Heart right ventricle (tissue), 16 donors: ENCODE measurements at regions of chr12 and their contacts with region 1.

Region 1: DNA sequence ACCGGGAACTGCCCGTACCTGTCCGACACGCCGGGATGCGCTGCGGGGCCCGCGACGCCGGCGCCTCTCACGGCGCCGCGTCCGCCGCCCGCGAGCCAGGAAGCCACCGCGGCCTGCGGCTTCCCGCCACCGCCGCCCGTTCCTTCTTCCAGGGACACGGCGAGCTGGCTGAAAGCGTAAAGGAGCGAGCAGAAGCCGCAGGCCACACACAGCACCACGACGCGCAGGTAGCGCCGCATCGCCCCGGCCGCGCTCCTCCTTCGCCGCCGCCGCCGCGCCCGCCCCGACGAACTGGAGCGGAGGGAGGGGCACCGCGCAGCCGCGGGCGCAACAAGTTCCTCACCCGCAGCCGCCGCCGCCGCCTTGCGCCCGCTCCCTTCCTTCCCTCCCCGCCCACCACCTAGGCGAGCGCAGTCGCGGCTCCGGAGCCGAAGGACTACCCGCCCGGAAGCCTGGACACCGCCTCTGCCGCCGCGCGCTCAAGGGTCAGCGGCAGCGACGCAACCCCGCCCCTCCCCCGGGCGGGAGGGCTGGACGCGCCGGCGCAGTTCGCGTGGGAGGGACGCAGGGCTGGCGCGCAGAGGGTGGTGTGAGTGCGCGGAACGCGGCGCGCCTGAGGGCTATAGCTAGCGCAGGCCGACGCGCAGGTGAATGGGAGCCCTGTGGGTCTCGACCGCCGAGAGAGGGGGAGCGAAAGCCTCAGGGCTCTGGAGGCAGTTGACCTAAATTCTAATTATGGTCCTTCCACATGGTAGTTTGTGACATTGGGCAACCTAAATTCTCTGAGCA is at the start of gene GXYLT1:
- DNase-seq: peak; percentile 93 to 95
- ATAC-seq: peak; percentile 98 to 100 (median 99)
- H3K4me3 ChIP-seq: peak within 1 kb of the TSS; percentile 49 to 87 (median 76)
- H3K27ac ChIP-seq: peak within 1 kb of the TSS; percentile 55 to 91 (median 88)
- H3K4me1 ChIP-seq: peaks cover 0 to 40% (median 29%) of the 10 kb centered on the region in 9 donors
- H3K27me3 ChIP-seq: no peaks in the 10 kb centered on the region
- CTCF ChIP-seq: peak in 2 of 9 donors; percentile 13 to 17
- total RNA-seq, gene GXYLT1: 4.2 to 7.8 (median 5.7) TPM

Region 2: GRCh38 chr12:42325653-42326474 is 181.3 kb after region 1 on chr12 and contains the starts of genes PPHLN1 and ZCRB1:
- intact Hi-C with region 1: loop called in 5 of 10 experiments (anchors 2 to 5 kb)
- DNase-seq: peak; percentile 79 to 81
- ATAC-seq: peak; percentile 96 to 99 (median 98)
- H3K4me3 ChIP-seq: peak within 1 kb of the TSS; percentile 60 to 94 (median 74)
- H3K27ac ChIP-seq: peak within 1 kb of the TSS; percentile 23 to 93 (median 80)
- H3K4me1 ChIP-seq: peaks cover 3 to 38% (median 22%) of the 10 kb centered on the region in 9 donors
- H3K27me3 ChIP-seq: no peaks in the 10 kb centered on the region
- CTCF ChIP-seq: no peak
- total RNA-seq, gene PPHLN1: 28.2 to 41.8 (median 34.8) TPM
- total RNA-seq, gene ZCRB1: 51.0 to 69.6 (median 58.6) TPM

Region 3: GRCh38 chr12:42469355-42470175 is 325.0 kb after region 1 on chr12:
- intact Hi-C with region 1: loop called in 2 of 10 experiments (anchors 10 kb)
- DNase-seq: no peak
- ATAC-seq: peak in 1 of 8 donors; percentile 23
- H3K4me3 ChIP-seq: peak overlapping the region in 3 of 10 donors; percentile 6 to 42 (median 6)
- H3K27ac ChIP-seq: peak overlapping the region in 2 of 10 donors; percentile 34 to 69
- H3K4me1 ChIP-seq: peaks cover 13 to 61% (median 50%) of the 10 kb centered on the region in 9 donors
- H3K27me3 ChIP-seq: no peaks in the 10 kb centered on the region
- CTCF ChIP-seq: no peak